GM13976 (cell line): ENCODE measurements at regions of chr2 and their contacts with region 1.

Region 1: DNA sequence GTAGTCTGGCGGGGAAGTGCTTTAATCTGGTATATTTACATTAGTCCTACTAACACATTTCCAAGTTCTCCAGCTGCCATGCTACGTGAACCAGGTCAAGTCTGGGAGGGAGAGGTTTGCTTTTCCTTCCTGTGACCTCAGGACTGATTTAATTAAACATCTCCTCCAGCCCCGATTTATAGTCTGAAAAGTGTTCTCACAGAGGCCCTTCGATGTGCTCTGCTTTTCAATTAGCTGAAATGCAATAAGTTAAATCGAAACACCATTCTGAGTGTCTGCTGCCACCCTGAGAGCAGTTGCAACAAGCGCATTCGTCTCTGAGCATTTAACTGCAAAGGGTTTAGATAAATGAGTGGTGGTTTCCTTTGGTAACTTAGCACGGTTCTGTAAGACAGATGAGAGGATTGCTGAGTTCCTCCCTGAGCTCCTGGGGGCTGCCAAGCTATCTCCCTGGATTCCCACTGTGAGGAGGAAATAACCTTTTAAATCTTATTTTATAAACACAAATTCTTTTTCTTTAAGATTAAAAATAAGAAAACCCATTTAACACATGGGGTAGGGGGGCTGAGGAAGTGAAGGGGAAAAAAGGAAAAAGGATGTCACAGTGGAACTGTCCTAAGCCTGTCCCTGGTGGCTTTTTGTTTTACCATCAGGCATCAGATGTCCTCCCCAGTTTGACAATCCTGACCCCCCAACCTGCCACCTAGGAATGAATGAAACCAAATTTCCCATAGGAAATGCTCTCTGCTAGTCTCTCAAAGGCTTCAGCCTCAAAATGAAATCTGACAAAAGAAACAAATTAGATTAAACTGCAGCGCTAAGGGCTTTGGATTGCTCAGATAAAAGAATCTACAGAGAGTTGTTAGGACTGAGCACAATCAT is 56.5 kb upstream of the CREB1 start:
- DNase-seq: peak; percentile 33
- CTCF ChIP-seq: peak; percentile 66

Region 2: GRCh38 chr2:206693399-206694137 is 779.7 kb before region 1 on chr2:
- in situ Hi-C with region 1: loop called (anchors 10 kb)
- DNase-seq: peak; percentile 49
- CTCF ChIP-seq: peak; percentile 18

Region 3: DNA sequence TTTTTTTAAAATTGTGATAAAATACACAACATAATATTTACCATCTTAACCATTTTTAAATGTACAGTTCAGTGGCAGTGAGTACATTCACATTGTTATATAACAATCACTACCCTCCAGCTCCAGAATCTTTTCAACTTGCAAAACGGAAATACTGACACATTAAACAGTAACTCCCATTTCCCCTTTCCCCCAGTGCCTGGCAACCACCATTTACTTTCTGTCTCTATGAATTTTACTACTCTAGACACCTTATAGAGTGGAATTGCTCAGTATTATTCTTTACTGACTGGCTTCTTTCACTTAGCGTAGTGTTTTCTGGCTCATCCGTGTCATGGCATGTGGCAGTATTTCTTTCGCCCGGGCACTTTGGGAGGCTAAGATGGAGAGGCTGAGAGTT is 675.3 kb before region 1 on chr2:
- in situ Hi-C with region 1: loop called (anchors 5 kb)
- DNase-seq: no peak
- CTCF ChIP-seq: no peak

Region 4: DNA sequence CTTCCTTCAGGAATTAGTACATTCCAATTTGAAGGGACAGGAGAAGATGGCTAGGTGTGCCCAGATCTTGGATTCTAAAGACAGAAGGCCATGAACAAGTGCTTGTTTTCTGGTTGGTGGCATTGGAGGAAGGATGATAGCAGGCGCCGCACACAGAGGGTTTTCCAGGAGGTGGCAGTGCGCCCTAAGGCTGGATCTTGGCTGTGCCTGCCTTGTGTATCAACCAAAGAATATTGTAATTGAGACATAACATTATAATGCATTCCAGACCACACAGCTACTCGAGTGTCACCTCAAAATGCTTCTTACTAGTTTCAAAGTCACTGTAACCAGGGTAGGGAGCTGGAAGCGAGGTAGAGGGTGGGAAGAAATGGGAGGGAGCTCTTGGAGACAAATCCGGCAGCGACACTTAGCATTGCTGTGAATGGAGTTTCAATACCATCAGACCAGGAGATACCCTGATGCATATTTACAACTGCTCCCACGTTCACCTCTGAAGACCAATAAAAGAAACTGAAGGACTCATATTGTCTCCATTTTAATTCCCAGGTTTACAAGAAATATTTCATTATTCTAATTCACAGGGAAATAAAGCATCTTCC is 491.4 kb before region 1 on chr2:
- in situ Hi-C with region 1: loop called (anchors 10 kb)
- DNase-seq: peak; percentile 17
- CTCF ChIP-seq: peak; percentile 43